MCF 10A (cell line): ENCODE measurements at regions of chr5 and their contacts with region 1.

Region 1: GRCh38 chr5:81838307-81838906 is 87.5 kb upstream of the SSBP2 start:
- DNase-seq: peak; percentile 48
- H3K4me3 Mint-ChIP-seq: no peak overlapping the region
- H3K27ac Mint-ChIP-seq: no peak overlapping the region
- H3K4me1 Mint-ChIP-seq: peaks cover 16% of the 10 kb centered on the region
- H3K27me3 Mint-ChIP-seq: no peaks in the 10 kb centered on the region
- CTCF ChIP-seq: peak; percentile 33

Region 2: GRCh38 chr5:81425569-81425968 is 412.8 kb before region 1 on chr5:
- CTCF ChIA-PET with region 1: no interaction called
- POLR2A ChIA-PET with region 1: no interaction called
- intact Hi-C with region 1: loop called (anchors 5 kb)
- DNase-seq: peak; percentile 49
- H3K4me3 Mint-ChIP-seq: no peak overlapping the region
- H3K27ac Mint-ChIP-seq: peak overlapping the region; percentile 16
- H3K4me1 Mint-ChIP-seq: peaks cover 16% of the 10 kb centered on the region
- H3K27me3 Mint-ChIP-seq: no peaks in the 10 kb centered on the region
- CTCF ChIP-seq: peak; percentile 51

Region 3: DNA sequence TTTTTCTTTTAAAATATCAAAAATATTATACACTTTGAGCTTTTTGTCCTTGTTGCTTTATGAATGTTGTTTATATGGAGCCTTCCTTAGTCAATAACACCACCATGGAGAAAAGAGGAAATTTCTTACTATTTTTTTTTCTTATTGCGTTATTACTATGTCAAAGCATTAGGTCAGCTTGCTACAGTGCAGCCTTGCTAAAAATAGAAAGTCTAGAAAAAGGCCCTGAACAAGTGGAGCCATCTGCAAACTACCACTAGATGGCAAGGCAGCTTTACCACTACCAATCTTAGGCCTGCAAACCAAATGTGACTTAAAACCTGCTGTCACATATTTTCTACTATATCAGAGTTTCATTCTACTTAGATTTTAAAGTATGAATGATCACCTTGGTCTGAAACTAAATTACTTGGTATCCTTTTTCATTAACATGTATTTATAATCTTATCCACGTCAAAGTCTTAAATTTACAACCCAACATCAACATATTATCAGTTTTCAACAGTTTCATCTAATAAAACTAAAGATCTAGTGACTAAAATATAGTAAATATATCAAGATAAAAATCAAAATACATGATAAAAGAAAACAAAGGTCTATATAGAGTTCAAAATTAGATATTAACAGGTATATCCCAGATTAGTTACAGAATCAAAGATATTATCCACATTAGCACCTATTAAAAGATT is 331.4 kb before region 1 on chr5:
- CTCF ChIA-PET with region 1: interaction called, 3 read pairs
- POLR2A ChIA-PET with region 1: no interaction called
- intact Hi-C with region 1: loop called (anchors 5 kb)
- DNase-seq: peak; percentile 79
- H3K4me3 Mint-ChIP-seq: no peak overlapping the region
- H3K27ac Mint-ChIP-seq: no peak overlapping the region
- H3K4me1 Mint-ChIP-seq: no peaks in the 10 kb centered on the region
- H3K27me3 Mint-ChIP-seq: no peaks in the 10 kb centered on the region
- CTCF ChIP-seq: peak; percentile 73

Region 4: DNA sequence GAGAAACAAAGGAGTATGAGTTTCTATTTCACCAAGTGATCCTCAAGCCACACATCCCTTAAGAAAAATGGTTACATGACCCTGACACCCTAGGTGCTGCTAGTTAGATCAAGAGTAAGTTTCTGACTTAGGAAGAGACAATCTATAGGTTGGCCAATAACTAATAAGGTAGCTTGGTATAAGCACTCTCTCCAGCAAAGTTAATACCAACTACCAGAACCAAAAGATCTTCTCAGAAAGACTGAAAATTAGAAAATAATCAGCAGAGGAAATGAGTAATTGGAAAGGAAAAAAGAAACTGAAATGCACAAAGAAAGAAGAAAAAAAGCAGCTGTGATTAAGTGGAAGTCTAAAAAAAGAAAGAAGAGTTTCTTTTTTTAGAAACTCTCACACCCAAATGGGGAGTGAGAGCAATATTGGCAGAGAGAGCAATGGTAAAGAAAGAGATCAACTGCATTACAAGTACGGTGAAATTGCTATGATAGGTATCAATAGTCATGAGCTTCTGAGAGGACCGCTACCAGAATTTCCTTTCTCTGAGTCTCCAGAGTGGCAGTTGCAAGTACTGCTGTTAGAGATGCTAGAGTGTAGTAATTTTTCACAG is 1043.3 kb after region 1 on chr5:
- CTCF ChIA-PET with region 1: no interaction called
- POLR2A ChIA-PET with region 1: no interaction called
- intact Hi-C with region 1: no loop called
- DNase-seq: no peak
- H3K4me3 Mint-ChIP-seq: no peak overlapping the region
- H3K27ac Mint-ChIP-seq: no peak overlapping the region
- H3K4me1 Mint-ChIP-seq: no peaks in the 10 kb centered on the region
- H3K27me3 Mint-ChIP-seq: no peaks in the 10 kb centered on the region
- CTCF ChIP-seq: no peak